CD8-positive, alpha-beta T cell (primary cell): ENCODE measurements at regions of chr13 and their contacts with region 1.

Region 1: DNA sequence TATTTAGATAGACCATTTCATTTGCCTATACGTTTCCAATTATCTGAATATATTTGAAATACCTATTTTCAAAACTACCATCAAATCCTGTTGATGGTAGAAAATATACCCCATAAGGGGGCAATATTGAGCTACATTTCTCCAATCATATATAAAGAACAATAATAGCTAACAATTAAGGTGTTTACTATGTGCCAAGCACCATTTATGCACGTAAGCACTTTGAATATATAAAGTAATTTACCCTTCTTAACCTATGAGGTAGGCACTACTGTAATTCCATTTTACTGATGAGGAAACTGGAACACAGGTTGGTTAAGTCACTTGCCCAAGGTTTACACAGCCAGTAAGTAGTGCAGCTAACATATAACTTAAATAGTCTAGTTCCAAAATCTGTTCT is 79.2 kb downstream of the UBL3 start:
- DNase-seq: peak in 2 of 9 experiments; percentile 55 to 68
- ATAC-seq: peak; percentile 65
- H3K4me3 ChIP-seq: no peak overlapping the region
- H3K4me3 Mint-ChIP-seq: no peak overlapping the region
- H3K27ac ChIP-seq: no peak overlapping the region
- H3K27ac Mint-ChIP-seq: no peak overlapping the region
- H3K4me1 ChIP-seq: no peaks in the 10 kb centered on the region
- H3K4me1 Mint-ChIP-seq: no peaks in the 10 kb centered on the region
- H3K27me3 ChIP-seq: no peaks in the 10 kb centered on the region
- H3K27me3 Mint-ChIP-seq: no peaks in the 10 kb centered on the region
- CTCF ChIP-seq: peak; percentile 77

Region 2: GRCh38 chr13:29817604-29818378 is 46.5 kb after region 1 on chr13:
- CTCF ChIA-PET with region 1: no interaction called
- POLR2A ChIA-PET with region 1: no interaction called
- intact Hi-C with region 1: loop called in 1 of 2 experiments (anchors 5 kb)
- DNase-seq: no peak
- ATAC-seq: no peak
- H3K4me3 ChIP-seq: no peak overlapping the region
- H3K4me3 Mint-ChIP-seq: peak overlapping the region; percentile 26
- H3K27ac ChIP-seq: no peak overlapping the region
- H3K27ac Mint-ChIP-seq: peak overlapping the region; percentile 19
- H3K4me1 ChIP-seq: peaks cover 13% of the 10 kb centered on the region
- H3K4me1 Mint-ChIP-seq: peaks cover 66% of the 10 kb centered on the region
- H3K27me3 ChIP-seq: no peaks in the 10 kb centered on the region
- H3K27me3 Mint-ChIP-seq: no peaks in the 10 kb centered on the region
- CTCF ChIP-seq: no peak

Region 3: DNA sequence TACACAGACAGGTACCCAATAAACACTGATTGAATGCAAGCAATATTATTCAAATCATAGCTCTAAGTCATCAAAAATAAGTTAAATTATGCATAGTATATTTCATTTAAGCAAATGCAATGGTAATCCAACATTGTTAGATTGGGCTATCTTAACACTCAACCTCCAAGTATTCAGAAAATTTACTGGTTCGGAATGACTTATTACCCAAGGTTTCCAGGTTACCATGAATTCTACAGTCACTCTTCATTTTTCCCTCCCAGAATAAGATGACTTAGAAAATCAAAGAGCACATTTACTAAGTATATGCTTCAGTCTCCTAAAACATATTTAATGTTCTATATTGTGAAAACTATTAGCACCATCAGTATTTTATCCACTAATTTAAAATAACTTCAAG is 73.2 kb after region 1 on chr13:
- CTCF ChIA-PET with region 1: interaction called, 4 read pairs
- POLR2A ChIA-PET with region 1: no interaction called
- intact Hi-C with region 1: loop called (anchors 2 to 5 kb)
- DNase-seq: no peak
- ATAC-seq: no peak
- H3K4me3 ChIP-seq: no peak overlapping the region
- H3K4me3 Mint-ChIP-seq: no peak overlapping the region
- H3K27ac ChIP-seq: no peak overlapping the region
- H3K27ac Mint-ChIP-seq: no peak overlapping the region
- H3K4me1 ChIP-seq: peaks cover 29% of the 10 kb centered on the region
- H3K4me1 Mint-ChIP-seq: peaks cover 73% of the 10 kb centered on the region
- H3K27me3 ChIP-seq: no peaks in the 10 kb centered on the region
- H3K27me3 Mint-ChIP-seq: no peaks in the 10 kb centered on the region
- CTCF ChIP-seq: no peak

Region 4: DNA sequence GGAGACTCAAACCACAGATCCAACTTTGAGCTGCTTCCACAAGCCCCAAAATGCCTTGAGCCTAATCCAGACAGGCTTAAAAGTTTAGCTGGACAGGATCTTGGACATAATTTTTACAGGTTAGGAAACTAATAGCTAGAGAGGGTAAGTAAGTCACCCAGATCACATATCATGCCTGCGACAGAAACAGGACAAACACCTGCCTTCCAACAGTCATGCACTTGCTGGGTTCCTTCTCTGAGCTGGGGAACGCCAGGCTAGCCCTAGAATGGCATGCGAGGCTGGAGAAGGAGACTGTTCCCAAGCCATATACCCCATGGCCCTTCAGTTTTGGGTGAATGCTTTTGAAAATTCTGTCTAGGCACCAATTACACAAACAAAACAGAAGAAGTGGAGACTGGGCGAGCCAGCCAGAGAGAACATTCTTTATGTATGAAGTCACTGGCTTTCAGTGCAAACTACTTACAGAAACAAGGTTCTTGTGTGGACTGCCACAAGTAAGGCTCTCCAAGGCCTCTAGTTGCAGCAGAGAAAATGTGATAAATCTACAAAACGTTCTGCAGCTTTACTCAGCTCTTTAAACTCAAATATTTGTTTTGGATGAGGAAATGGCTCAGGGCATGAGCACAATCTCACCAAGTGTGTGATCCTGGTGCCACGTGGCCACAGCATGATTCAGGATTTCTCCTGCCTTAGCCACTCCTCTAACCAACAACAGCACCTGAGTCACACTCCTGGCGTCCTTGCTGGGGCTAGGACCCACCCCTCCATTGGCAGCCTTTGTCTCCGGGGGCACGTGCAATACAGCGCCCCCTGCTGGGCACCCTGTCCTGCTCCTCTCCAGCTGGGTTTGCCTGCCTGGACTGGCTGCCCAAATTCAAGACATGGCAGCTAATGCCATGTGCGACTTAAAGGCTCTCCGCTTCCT is 152.6 kb after region 1 on chr13:
- CTCF ChIA-PET with region 1: interaction called, 6 read pairs
- POLR2A ChIA-PET with region 1: no interaction called
- intact Hi-C with region 1: loop called (anchors 1 to 2 kb)
- DNase-seq: peak in 8 of 9 experiments; percentile 30 to 74 (median 61)
- ATAC-seq: peak; percentile 80
- H3K4me3 ChIP-seq: no peak overlapping the region
- H3K4me3 Mint-ChIP-seq: no peak overlapping the region
- H3K27ac ChIP-seq: no peak overlapping the region
- H3K27ac Mint-ChIP-seq: no peak overlapping the region
- H3K4me1 ChIP-seq: no peaks in the 10 kb centered on the region
- H3K4me1 Mint-ChIP-seq: peaks cover 17% of the 10 kb centered on the region
- H3K27me3 ChIP-seq: no peaks in the 10 kb centered on the region
- H3K27me3 Mint-ChIP-seq: no peaks in the 10 kb centered on the region
- CTCF ChIP-seq: peak; percentile 64

Region 5: GRCh38 chr13:29935309-29935981 is 164.2 kb after region 1 on chr13:
- CTCF ChIA-PET with region 1: interaction called, 6 read pairs
- POLR2A ChIA-PET with region 1: interaction called, 5 read pairs
- intact Hi-C with region 1: loop called in 1 of 2 experiments (anchors 5 kb)
- DNase-seq: peak; percentile 40 to 90 (median 74)
- ATAC-seq: peak; percentile 95
- H3K4me3 ChIP-seq: peak overlapping the region; percentile 40 to 51
- H3K4me3 Mint-ChIP-seq: peak overlapping the region; percentile 86
- H3K27ac ChIP-seq: peak overlapping the region; percentile 29 to 47
- H3K27ac Mint-ChIP-seq: peak overlapping the region; percentile 96
- H3K4me1 ChIP-seq: peaks cover 44% of the 10 kb centered on the region
- H3K4me1 Mint-ChIP-seq: peaks cover 50% of the 10 kb centered on the region
- H3K27me3 ChIP-seq: no peaks in the 10 kb centered on the region
- H3K27me3 Mint-ChIP-seq: no peaks in the 10 kb centered on the region
- CTCF ChIP-seq: no peak

Region 6: DNA sequence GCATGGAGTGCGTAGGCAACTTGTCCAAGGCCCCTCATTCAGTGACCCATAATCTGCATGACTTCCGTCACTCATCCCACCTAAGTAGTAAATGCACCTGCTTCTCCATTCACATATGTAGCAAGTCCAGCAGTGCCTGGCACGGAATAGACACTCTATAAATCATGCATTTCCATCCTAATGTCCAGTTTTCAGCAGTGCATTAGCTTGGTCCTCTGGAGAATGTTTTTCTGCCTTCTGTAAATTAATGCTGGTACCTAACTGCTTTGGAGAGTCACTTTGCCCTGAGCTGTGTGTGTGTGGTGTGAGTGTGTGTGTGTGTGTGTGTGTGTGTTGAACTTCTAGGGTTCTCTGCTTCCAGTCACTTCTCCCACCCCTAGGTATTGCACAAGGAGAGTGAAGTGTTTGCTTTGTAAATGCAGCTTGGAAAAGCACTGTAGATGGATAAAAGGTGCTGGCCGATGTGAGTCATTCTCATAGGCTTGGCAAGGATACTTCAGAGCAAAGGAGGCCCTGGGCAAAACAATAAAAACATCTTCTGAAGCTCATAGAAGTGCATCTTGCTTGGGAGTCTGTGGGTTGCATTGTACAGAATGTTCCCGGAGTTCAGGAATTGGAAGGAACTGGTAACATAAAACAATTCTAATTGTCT is 354.3 kb after region 1 on chr13:
- CTCF ChIA-PET with region 1: interaction called, 12 read pairs
- POLR2A ChIA-PET with region 1: no interaction called
- intact Hi-C with region 1: no loop called
- DNase-seq: no peak
- ATAC-seq: no peak
- H3K4me3 ChIP-seq: no peak overlapping the region
- H3K4me3 Mint-ChIP-seq: no peak overlapping the region
- H3K27ac ChIP-seq: no peak overlapping the region
- H3K27ac Mint-ChIP-seq: no peak overlapping the region
- H3K4me1 ChIP-seq: peaks cover 12% of the 10 kb centered on the region
- H3K4me1 Mint-ChIP-seq: peaks cover 26% of the 10 kb centered on the region
- H3K27me3 ChIP-seq: no peaks in the 10 kb centered on the region
- H3K27me3 Mint-ChIP-seq: no peaks in the 10 kb centered on the region
- CTCF ChIP-seq: no peak